Ascending aorta (tissue), 2 donors: ENCODE measurements at regions of chr7 and their contacts with region 1.

Region 1: GRCh38 chr7:91596287-91596852 is 284.1 kb downstream of the MTERF1 start:
- DNase-seq: no peak
- H3K4me3 ChIP-seq: no peak overlapping the region
- H3K27ac ChIP-seq: no peak overlapping the region
- H3K4me1 ChIP-seq: no peaks in the 10 kb centered on the region
- H3K27me3 ChIP-seq: no peaks in the 10 kb centered on the region
- CTCF ChIP-seq: no peak

Region 2: GRCh38 chr7:91579837-91580236 is 16.5 kb before region 1 on chr7:
- intact Hi-C with region 1: loop called (anchors 2 kb)
- DNase-seq: no peak
- H3K4me3 ChIP-seq: no peak overlapping the region
- H3K27ac ChIP-seq: no peak overlapping the region
- H3K4me1 ChIP-seq: no peaks in the 10 kb centered on the region
- H3K27me3 ChIP-seq: no peaks in the 10 kb centered on the region
- CTCF ChIP-seq: no peak

Region 3: DNA sequence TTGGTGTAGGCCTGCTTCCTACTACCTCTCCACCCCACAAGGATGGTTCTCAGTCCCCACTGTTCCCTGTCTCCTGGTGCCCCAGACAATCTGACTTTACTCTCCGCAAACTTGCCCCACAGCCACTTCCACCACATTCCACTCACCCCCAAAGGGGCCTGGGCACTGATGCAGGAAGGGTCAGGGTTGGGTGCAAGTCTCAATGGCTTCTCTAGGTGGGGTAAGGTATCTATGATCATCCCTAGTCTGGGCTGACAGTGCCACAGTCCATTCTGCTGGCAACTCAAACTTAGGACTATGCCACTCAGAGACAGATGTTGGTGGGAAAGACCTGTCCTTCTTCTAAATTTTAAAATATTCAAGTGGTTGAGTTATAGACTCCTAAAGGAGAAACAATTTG is 44.4 kb after region 1 on chr7:
- intact Hi-C with region 1: no loop called
- DNase-seq: no peak
- H3K4me3 ChIP-seq: no peak overlapping the region
- H3K27ac ChIP-seq: no peak overlapping the region
- H3K4me1 ChIP-seq: no peaks in the 10 kb centered on the region
- H3K27me3 ChIP-seq: no peaks in the 10 kb centered on the region
- CTCF ChIP-seq: no peak